ENCODE measurements at regions of chr4 and their contacts with region 1.

Region 1: GRCh38 chr4:103008875-103009729 is 10.4 kb downstream of the SLC9B1 start:
- DNase-seq: peak; percentile 22
- H3K4me3 Mint-ChIP-seq: no peak overlapping the region
- H3K27ac Mint-ChIP-seq: no peak overlapping the region
- H3K4me1 Mint-ChIP-seq: no peaks in the 10 kb centered on the region
- H3K27me3 Mint-ChIP-seq: no peaks in the 10 kb centered on the region

Region 2: DNA sequence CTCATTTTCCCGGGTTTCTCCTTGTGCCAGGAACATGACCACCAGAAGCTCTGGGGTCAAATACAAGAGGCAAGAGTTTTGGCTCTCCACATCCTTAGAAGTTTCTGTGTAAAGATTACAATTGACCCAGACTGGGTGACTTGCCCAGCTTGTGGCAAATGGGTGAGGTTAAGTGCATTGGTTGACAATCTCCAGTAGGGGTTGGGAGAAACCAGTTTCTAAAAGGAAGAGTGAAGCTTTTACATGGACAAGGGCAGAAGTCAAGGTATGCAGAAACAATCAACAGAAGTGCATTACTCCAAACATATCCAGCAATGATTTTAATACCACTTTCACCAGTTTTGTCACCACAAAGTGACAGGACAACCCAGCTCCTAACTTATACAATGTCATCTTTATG is 753.6 kb before region 1 on chr4:
- CTCF ChIA-PET with region 1: no interaction called
- intact Hi-C with region 1: loop called (anchors 2 kb)
- DNase-seq: no peak
- H3K4me3 Mint-ChIP-seq: no peak overlapping the region
- H3K27ac Mint-ChIP-seq: no peak overlapping the region
- H3K4me1 Mint-ChIP-seq: no peaks in the 10 kb centered on the region
- H3K27me3 Mint-ChIP-seq: no peaks in the 10 kb centered on the region

Region 3: DNA sequence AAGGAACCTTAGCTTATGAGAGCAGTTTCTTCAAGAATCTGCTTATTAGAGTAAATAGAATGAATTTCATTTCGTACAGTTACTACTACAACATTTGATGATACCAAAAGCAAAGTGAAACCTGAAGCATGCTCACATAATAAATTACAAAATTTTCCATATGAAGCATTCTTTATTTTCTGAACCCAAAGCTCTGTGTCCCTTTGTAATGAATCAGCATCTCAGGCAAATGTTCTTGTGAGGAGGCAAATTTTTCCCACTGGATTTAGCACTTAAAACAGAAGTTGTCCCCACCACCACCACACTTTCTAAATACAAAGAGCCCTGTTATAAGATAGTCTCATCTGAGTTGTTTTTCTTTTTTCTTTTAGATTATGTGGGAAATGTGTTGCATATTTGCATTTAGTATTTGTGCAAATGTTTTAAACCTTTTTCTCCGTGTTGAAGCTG is 578.6 kb before region 1 on chr4:
- CTCF ChIA-PET with region 1: interaction called, 3 read pairs
- intact Hi-C with region 1: loop called (anchors 1 kb)
- DNase-seq: no peak
- H3K4me3 Mint-ChIP-seq: peak overlapping the region; percentile 82
- H3K27ac Mint-ChIP-seq: peak overlapping the region; percentile 81
- H3K4me1 Mint-ChIP-seq: peaks cover 8% of the 10 kb centered on the region
- H3K27me3 Mint-ChIP-seq: peaks cover 5% of the 10 kb centered on the region

Region 4: GRCh38 chr4:102449751-102450352 is 559.2 kb before region 1 on chr4:
- CTCF ChIA-PET with region 1: interaction called, 3 read pairs
- intact Hi-C with region 1: loop called (anchors 1 kb)
- DNase-seq: peak; percentile 76
- H3K4me3 Mint-ChIP-seq: no peak overlapping the region
- H3K27ac Mint-ChIP-seq: no peak overlapping the region
- H3K4me1 Mint-ChIP-seq: peaks cover 18% of the 10 kb centered on the region
- H3K27me3 Mint-ChIP-seq: no peaks in the 10 kb centered on the region

Region 5: DNA sequence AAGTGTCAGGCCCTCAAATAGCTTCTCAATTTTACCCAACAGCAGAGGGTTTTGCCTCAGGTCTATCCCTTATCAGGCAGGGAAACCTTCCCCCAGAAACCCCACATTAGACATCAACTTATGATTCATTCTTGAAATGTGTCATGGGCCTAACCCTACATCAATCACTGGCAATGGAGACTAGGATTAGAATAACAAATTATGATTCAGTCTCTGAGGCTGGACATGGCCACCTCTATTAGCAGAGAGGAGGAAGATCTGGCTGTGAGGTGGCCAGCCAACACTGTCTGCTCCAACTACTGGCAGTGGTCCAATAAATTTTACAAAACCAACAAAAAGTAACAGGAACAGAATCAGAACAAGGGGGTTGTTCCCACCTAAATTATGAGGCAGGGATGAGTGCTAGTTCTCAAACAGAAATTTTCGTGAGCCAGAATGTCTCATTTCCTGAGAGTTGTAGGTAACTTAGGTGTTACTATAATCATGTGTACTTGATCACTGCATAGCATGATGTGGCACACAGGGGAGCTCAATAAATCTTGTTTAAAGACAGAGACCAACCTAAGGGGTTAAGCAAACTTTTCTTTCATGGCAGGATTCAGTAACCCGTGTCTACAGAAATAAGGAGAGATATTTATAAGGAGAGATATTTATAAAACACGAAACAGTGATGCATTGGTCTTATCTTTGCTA is 381.1 kb before region 1 on chr4:
- CTCF ChIA-PET with region 1: interaction called, 8 read pairs
- intact Hi-C with region 1: loop called (anchors 1 kb)
- DNase-seq: peak; percentile 62
- H3K4me3 Mint-ChIP-seq: peak overlapping the region; percentile 22
- H3K27ac Mint-ChIP-seq: peak overlapping the region; percentile 54
- H3K4me1 Mint-ChIP-seq: peaks cover 75% of the 10 kb centered on the region
- H3K27me3 Mint-ChIP-seq: no peaks in the 10 kb centered on the region

Region 6: DNA sequence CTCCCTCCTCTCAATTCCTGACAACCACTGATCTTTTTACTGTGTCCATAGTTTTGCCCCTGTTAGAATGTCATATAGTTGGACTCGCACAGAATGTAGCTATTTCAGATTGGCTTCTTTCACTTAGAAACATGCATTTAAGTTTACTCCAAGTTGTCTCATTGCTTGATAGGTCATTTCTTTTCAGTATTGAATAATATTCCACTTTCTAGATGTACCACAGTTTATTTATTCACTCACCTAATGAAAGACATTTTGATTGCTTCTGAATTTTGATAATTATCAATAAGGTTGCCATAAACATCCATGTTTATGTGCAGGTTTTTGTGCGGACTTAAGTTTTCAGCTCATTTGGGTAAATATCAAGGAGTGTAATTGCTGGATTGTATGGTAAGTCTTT is 28.1 kb before region 1 on chr4:
- CTCF ChIA-PET with region 1: no interaction called
- intact Hi-C with region 1: no loop called
- DNase-seq: no peak
- H3K4me3 Mint-ChIP-seq: no peak overlapping the region
- H3K27ac Mint-ChIP-seq: no peak overlapping the region
- H3K4me1 Mint-ChIP-seq: no peaks in the 10 kb centered on the region
- H3K27me3 Mint-ChIP-seq: no peaks in the 10 kb centered on the region

Measured in activated naive CD4-positive, alpha-beta T cell treated with anti-CD3 and anti-CD28 coated beads for 36 hours (primary cell).